ENCODE measurements at regions of chr1 and their contacts with region 1.

Region 1: GRCh38 chr1:20212685-20213331 is 26.5 kb upstream of the PLA2G2C start:
- DNase-seq: peak; percentile 87
- H3K4me3 Mint-ChIP-seq: no peak overlapping the region
- H3K27ac Mint-ChIP-seq: no peak overlapping the region
- H3K4me1 Mint-ChIP-seq: peaks cover 27% of the 10 kb centered on the region
- H3K27me3 Mint-ChIP-seq: no peaks in the 10 kb centered on the region
- CTCF ChIP-seq: peak; percentile 81

Region 2: GRCh38 chr1:19892628-19893168 is 320.1 kb before region 1 on chr1:
- CTCF ChIA-PET with region 1: no interaction called
- POLR2A ChIA-PET with region 1: no interaction called
- intact Hi-C with region 1: no loop called
- DNase-seq: no peak
- H3K4me3 Mint-ChIP-seq: no peak overlapping the region
- H3K27ac Mint-ChIP-seq: peak overlapping the region; percentile 62
- H3K4me1 Mint-ChIP-seq: peaks cover 18% of the 10 kb centered on the region
- H3K27me3 Mint-ChIP-seq: no peaks in the 10 kb centered on the region
- CTCF ChIP-seq: no peak

Region 3: GRCh38 chr1:20194757-20195461 is 17.9 kb before region 1 on chr1:
- CTCF ChIA-PET with region 1: interaction called, 13 read pairs
- POLR2A ChIA-PET with region 1: no interaction called
- intact Hi-C with region 1: no loop called
- DNase-seq: peak; percentile 68
- H3K4me3 Mint-ChIP-seq: no peak overlapping the region
- H3K27ac Mint-ChIP-seq: no peak overlapping the region
- H3K4me1 Mint-ChIP-seq: peaks cover 31% of the 10 kb centered on the region
- H3K27me3 Mint-ChIP-seq: no peaks in the 10 kb centered on the region
- CTCF ChIP-seq: peak; percentile 59

Region 4: GRCh38 chr1:20200966-20201365 is 11.8 kb before region 1 on chr1:
- CTCF ChIA-PET with region 1: interaction called, 34 read pairs
- POLR2A ChIA-PET with region 1: no interaction called
- intact Hi-C with region 1: no loop called
- DNase-seq: no peak
- H3K4me3 Mint-ChIP-seq: no peak overlapping the region
- H3K27ac Mint-ChIP-seq: no peak overlapping the region
- H3K4me1 Mint-ChIP-seq: peaks cover 11% of the 10 kb centered on the region
- H3K27me3 Mint-ChIP-seq: no peaks in the 10 kb centered on the region
- CTCF ChIP-seq: no peak

Region 5: DNA sequence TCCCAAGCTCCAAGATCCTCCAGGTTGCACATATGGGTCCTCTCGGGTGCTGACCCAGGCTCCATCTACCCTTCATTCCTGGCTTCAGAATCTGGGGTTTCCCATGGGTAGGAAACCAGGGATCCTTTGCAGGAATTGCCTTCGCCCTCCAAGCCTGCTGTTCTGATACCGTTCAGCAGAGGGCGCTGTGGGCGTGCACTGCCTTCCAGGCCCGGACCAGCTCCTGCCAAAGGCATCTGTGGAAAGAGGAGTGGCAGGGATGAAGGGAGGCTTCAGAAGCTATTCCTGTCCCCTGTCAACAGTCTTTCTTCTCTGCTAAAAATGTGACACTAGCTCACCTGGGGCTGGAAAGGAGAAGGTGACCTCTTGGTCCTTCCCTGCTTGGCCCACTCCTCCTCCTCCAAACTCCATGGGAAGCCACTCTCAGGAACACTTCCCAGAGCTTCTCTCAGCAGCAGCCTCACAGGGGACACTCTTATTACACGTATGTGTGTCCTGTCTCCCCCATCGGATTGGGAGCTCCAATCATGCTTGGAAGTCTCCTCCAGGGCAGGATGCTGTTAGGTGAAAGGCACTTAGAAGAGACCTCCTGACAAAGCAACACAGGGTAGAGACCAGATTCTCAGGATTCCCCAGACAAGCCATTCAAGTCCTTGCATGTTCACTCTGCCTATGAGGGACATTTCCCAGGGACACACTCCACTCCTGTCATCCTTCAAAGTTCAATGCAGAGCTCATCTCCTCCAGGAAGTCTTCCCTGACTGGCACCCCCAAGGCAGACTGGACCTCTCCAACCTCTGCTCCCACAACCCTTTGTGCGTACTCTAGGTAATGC is 149.2 kb after region 1 on chr1:
- CTCF ChIA-PET with region 1: interaction called, 3 read pairs
- POLR2A ChIA-PET with region 1: no interaction called
- intact Hi-C with region 1: loop called (anchors 5 kb)
- DNase-seq: peak; percentile 62
- H3K4me3 Mint-ChIP-seq: no peak overlapping the region
- H3K27ac Mint-ChIP-seq: no peak overlapping the region
- H3K4me1 Mint-ChIP-seq: peaks cover 13% of the 10 kb centered on the region
- H3K27me3 Mint-ChIP-seq: peaks cover 22% of the 10 kb centered on the region
- CTCF ChIP-seq: peak; percentile 85

Region 6: GRCh38 chr1:20430355-20431175 is 217.8 kb after region 1 on chr1:
- CTCF ChIA-PET with region 1: interaction called, 6 read pairs
- POLR2A ChIA-PET with region 1: no interaction called
- intact Hi-C with region 1: loop called (anchors 1 kb)
- DNase-seq: peak; percentile 43
- H3K4me3 Mint-ChIP-seq: no peak overlapping the region
- H3K27ac Mint-ChIP-seq: no peak overlapping the region
- H3K4me1 Mint-ChIP-seq: peaks cover 7% of the 10 kb centered on the region
- H3K27me3 Mint-ChIP-seq: peaks cover 2% of the 10 kb centered on the region
- CTCF ChIP-seq: peak; percentile 85